Common myeloid progenitor, CD34-positive (primary cell): ENCODE measurements at regions of chr12 and their contacts with region 1.

Region 1: GRCh38 chr12:98490501-98491453 is 24.6 kb upstream of the TMPO start:
- DNase-seq: peak; percentile 76 to 83 (median 77)
- H3K4me3 ChIP-seq: peak overlapping the region in 6 of 7 experiments; percentile 23 to 64 (median 46)
- H3K27ac ChIP-seq: no peak overlapping the region
- H3K4me1 ChIP-seq: peaks cover 0 to 8% (median 0%) of the 10 kb centered on the region in 4 experiments
- H3K27me3 ChIP-seq: no peaks in the 10 kb centered on the region

Region 2: DNA sequence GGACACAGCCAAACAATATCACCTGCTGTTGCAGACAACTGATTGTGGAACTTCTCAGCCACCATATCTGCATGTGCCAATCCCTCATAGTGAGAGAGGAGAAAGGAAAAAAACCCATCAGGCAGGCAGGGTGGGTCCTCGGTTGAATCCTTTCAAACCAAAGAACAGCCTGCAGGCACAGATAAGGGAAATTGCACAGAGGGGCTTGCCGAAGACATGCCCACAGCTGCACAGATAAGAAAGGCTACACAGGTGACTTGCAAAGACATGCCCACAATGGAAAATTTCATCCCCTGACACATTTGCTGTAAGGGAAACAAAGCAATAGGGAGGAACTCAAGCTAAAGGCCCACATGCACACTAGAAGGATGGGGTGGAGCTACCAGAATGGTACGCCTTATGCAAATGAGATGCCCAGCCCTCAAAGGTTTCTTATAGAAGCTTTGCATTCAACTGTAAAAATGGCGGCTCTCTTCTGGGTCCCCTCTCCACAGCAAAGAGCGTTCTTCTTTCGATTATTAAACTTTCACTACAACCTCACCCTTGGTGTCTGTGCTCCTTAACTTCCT is 145.4 kb before region 1 on chr12:
- CTCF ChIA-PET with region 1: no interaction called
- POLR2A ChIA-PET with region 1: no interaction called
- DNase-seq: peak in 2 of 3 donors; percentile 5 to 15
- H3K4me3 ChIP-seq: no peak overlapping the region
- H3K27ac ChIP-seq: no peak overlapping the region
- H3K4me1 ChIP-seq: no peaks in the 10 kb centered on the region
- H3K27me3 ChIP-seq: peaks cover 0 to 2% (median 0%) of the 10 kb centered on the region in 5 experiments

Region 3: DNA sequence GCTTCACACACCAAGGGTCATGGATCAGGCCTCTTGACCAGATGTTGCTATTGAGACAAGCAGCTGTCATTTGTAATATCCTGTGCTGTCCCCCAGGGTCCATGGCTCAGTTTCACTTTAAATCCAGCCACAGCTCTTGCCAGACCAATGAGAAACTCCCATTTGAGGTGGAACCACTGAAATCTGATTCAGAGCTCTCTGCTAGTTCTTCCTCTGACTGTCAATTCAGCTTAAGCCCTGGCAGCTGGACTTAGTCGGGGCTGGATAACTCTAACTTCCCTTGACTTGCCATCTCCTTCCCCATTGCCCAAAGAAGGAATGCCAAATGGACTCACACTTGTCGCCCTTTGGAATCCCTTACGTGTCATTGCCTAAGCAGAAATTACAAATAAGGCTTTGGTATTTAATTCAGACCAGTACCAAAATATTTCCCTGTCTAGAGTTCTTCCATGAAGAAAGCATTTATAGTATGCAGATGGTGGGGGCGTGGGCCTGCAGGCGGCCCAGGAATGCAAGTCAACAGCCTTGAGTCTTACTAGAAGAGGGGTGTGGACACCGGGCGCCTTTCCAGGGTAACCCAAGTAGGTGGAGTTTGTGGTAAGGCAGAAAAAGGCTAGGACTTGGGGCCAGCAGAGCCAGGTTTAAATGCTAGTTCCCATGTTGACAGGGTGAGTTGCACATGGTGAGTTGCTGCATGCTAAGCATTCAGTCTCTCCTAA is 72.3 kb before region 1 on chr12:
- CTCF ChIA-PET with region 1: interaction called, 14 read pairs
- POLR2A ChIA-PET with region 1: no interaction called
- DNase-seq: peak in 2 of 3 donors; percentile 34 to 50
- H3K4me3 ChIP-seq: no peak overlapping the region
- H3K27ac ChIP-seq: no peak overlapping the region
- H3K4me1 ChIP-seq: peaks cover 0 to 8% (median 6%) of the 10 kb centered on the region in 4 experiments
- H3K27me3 ChIP-seq: no peaks in the 10 kb centered on the region

Region 4: DNA sequence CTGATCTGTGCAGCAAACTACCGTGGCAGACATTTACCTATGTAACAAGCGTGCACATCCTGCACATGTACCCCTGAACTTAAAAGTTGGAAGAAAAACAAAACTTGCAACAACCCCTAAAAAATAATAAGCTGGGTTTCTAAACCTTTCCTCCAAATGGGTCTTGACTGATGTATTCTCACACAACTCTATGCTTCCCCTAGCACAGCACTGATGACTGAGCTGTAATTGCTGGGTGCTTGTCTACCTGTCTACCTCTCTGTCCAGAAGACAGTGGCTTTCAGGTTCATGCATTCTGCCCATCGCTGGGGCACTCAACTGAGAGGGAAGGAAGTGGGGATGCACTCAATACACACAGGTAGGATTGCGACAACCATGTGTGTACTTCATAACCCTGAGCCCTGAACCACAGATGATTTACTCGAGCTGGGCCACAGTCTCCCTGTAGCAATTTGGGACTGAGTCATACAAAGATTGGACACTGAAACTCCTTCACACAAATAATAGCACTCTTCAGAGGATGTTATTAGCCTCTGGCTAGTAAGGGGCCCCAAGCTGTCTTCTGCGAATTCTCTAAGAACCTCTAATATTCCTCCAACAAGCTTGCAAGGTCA is 20.2 kb before region 1 on chr12:
- CTCF ChIA-PET with region 1: interaction called, 11 read pairs
- POLR2A ChIA-PET with region 1: no interaction called
- DNase-seq: no peak
- H3K4me3 ChIP-seq: no peak overlapping the region
- H3K27ac ChIP-seq: no peak overlapping the region
- H3K4me1 ChIP-seq: no peaks in the 10 kb centered on the region
- H3K27me3 ChIP-seq: peaks cover 0 to 2% (median 0%) of the 10 kb centered on the region in 5 experiments

Region 5: GRCh38 chr12:98503592-98504367 is 13.0 kb after region 1 on chr12:
- CTCF ChIA-PET with region 1: interaction called, 26 read pairs
- POLR2A ChIA-PET with region 1: interaction called, 3 read pairs
- DNase-seq: peak; percentile 94 to 97 (median 96)
- H3K4me3 ChIP-seq: peak overlapping the region; percentile 48 to 99 (median 97)
- H3K27ac ChIP-seq: peak overlapping the region; percentile 93 to 99
- H3K4me1 ChIP-seq: peaks cover 0 to 5% (median 2%) of the 10 kb centered on the region in 4 experiments
- H3K27me3 ChIP-seq: no peaks in the 10 kb centered on the region

Region 6: DNA sequence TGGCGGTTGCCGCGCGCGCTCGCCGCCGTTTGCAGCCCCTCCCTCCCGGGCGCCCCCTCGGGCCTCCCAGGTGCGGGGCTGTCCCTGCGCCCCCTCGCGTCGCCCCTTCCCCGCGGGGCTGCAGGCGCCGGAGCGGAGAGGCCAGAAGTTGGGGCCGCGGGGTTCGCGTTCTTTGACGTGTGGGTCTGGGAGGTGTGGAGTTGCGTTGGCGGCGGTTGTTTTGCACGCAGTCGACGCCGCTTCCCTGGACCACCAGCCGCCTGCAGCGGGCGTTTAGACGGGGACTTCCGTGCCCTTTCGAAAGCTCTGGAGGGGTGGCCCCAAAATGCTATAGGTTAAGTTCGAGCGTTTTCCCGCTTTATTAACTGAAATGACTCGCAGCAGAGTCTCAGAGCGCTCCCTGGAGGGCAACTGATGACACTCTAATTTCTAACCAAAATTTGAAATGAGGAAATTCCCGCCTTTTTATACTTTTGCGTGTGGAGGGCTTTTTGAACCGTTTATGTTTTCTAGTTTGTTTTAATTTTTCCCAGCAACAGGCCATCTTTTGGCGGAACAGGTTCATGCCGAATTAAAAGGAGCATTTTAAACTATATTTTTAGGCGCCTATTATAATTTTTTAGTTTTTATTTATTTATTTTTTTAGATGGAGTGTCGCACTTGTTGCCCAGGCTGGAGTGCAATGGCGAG is 25.6 kb after region 1 on chr12:
- CTCF ChIA-PET with region 1: interaction called, 68 read pairs
- POLR2A ChIA-PET with region 1: no interaction called
- DNase-seq: peak; percentile 90 to 96 (median 95)
- H3K4me3 ChIP-seq: peak overlapping the region; percentile 93 to 100 (median 98)
- H3K27ac ChIP-seq: peak overlapping the region; percentile 86 to 95
- H3K4me1 ChIP-seq: peaks cover 12 to 38% (median 22%) of the 10 kb centered on the region in 4 experiments
- H3K27me3 ChIP-seq: no peaks in the 10 kb centered on the region

Region 7: DNA sequence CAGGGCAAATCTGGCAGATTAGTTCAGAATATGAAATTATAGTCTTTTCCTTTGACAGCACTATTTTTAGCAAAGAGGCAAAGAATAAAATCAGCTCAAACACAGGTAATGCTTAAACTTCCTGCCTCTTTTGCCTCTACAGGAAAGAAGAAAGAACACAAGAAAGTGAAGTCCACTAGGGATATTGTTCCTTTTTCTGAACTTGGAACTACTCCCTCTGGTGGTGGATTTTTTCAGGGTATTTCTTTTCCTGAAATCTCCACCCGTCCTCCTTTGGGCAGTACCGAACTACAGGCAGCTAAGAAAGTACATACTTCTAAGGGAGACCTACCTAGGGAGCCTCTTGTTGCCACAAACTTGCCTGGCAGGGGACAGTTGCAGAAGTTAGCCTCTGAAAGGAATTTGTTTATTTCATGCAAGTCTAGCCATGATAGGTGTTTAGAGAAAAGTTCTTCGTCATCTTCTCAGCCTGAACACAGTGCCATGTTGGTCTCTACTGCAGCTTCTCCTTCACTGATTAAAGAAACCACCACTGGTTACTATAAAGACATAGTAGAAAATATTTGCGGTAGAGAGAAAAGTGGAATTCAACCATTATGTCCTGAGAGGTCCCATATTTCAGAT is 42.0 kb after region 1 on chr12:
- CTCF ChIA-PET with region 1: interaction called, 13 read pairs
- POLR2A ChIA-PET with region 1: no interaction called
- DNase-seq: peak; percentile 79 to 86 (median 84)
- H3K4me3 ChIP-seq: no peak overlapping the region
- H3K27ac ChIP-seq: peak overlapping the region in 1 of 2 experiments; percentile 11
- H3K4me1 ChIP-seq: peaks cover 0 to 4% (median under 1%) of the 10 kb centered on the region in 4 experiments
- H3K27me3 ChIP-seq: no peaks in the 10 kb centered on the region